Naive thymus-derived CD4-positive, alpha-beta T cell (primary cell): ENCODE measurements at regions of chr1 and their contacts with region 1.

Region 1: DNA sequence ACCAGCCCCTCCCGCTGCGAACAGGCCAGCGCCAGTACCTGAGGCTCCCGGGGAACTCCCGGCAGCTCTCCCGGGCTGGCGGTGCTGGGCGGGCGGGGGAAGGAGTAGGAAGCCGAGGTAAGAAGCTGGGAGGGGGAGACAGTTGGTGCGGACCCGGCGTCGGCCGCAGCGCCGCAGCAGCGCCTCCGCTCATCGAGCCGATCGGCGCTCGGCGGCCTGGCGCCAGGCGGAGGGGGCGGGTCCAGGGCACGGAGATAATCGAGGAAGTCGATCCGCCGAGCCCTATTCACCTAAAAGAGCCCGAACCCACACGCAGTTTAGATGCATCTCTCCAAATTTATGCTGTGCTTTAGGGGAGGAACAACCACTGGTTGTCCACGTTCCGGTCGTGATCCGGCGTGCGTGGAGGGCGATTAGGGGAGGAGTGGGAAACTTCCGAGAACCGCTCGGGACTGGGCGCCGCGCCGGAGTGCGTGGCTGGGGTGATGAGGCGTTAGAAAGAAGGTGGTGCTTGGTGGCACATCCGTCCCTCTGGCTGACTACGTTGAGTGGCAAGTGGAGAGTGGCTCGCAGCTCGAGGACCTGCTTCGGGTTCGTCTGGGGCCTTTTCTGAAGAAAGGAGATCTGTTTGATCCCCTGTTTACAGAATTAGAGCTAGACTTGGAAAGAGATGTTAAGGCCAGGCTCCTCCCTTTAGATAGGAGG is at the start of gene VAMP4:
- DNase-seq: peak; percentile 78 to 90 (median 87)
- ATAC-seq: peak; percentile 90
- H3K4me3 ChIP-seq: peak within 1 kb of the TSS; percentile 95
- H3K4me3 Mint-ChIP-seq: peak within 1 kb of the TSS; percentile 97 to 100 (median 99)
- H3K27ac ChIP-seq: peak within 1 kb of the TSS; percentile 95
- H3K27ac Mint-ChIP-seq: peak within 1 kb of the TSS; percentile 98 to 100 (median 100)
- H3K4me1 ChIP-seq: peaks cover 30 to 34% of the 10 kb centered on the region in 2 donors
- H3K4me1 Mint-ChIP-seq: peaks cover 25 to 62% (median 57%) of the 10 kb centered on the region in 7 donors
- H3K27me3 ChIP-seq: no peaks in the 10 kb centered on the region
- H3K27me3 Mint-ChIP-seq: no peaks in the 10 kb centered on the region
- total RNA-seq, gene VAMP4: 16.2 to 27.2 (median 19.7) TPM

Region 2: DNA sequence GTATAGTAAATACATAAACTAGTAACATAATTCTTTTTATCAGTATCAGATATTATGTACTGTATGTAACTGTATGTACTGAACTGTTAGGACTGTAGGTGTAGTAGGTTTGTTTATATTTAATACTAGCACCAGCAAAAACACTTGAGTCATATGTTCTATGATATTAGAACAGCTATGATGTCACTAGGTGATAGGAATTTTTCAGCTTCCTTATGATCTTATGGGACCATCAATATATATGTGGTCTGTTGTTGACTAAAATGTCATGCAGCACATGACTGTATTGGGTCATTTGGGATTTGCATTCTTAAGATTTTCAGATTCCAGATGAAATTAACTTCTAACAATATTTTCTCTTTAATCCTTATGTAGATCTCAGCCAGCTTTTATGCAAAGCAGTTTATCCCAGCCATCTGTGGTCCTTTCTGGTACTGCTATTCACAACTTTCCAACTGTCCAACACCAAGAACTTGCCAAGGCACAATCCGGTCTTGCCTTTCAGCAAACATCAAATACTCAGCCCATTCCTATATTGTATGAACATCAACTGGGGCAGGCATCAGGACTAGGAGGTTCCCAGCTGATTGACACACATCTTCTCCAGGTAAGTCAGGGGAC is 158.3 kb before region 1 on chr1:
- CTCF ChIA-PET with region 1: no interaction called
- POLR2A ChIA-PET with region 1: no interaction called
- intact Hi-C with region 1: loop called in 1 of 2 experiments (anchors 5 kb)
- DNase-seq: no peak
- ATAC-seq: no peak
- H3K4me3 ChIP-seq: no peak overlapping the region
- H3K4me3 Mint-ChIP-seq: no peak overlapping the region
- H3K27ac ChIP-seq: no peak overlapping the region
- H3K27ac Mint-ChIP-seq: peak overlapping the region in 4 of 9 donors; percentile 1 to 28 (median 8)
- H3K4me1 ChIP-seq: no peaks in the 10 kb centered on the region
- H3K4me1 Mint-ChIP-seq: peaks cover 4 to 33% (median 8%) of the 10 kb centered on the region in 7 donors
- H3K27me3 ChIP-seq: no peaks in the 10 kb centered on the region
- H3K27me3 Mint-ChIP-seq: no peaks in the 10 kb centered on the region

Region 3: DNA sequence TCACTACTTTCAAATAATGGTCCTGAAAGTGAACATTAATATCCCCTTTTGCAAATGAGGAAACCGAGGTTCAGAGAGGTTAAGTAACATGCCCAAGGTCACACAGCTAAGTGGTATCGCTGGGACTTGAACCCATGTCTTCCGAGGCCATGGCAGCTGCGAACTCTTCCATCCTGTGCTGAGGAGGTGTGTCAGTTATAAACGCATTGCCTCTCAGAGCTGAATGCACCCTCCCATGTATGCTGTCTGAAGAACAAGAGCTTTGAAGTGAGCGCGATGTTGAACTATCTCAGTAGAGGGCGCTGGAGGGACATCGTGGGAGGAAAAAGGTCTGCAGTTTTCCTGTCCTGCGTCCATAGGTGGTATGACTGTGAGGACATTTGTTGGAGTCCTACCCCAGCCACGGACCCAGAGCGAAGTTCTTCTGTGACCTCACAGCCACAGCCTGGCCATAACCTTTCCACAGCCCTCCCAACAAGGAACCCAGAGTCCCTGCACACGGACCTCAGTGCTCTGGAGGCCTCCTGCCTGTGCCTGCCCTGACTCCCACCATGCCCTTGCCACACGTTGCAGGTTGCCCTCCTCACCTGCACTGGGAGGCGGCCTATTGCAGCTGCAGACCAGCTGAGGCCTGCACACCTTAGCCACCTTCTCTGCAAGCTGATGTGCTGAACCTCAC is 97.1 kb before region 1 on chr1:
- CTCF ChIA-PET with region 1: no interaction called
- POLR2A ChIA-PET with region 1: no interaction called
- intact Hi-C with region 1: loop called in 1 of 2 experiments (anchors 1 kb)
- DNase-seq: peak; percentile 19 to 73 (median 62)
- ATAC-seq: peak; percentile 90
- H3K4me3 ChIP-seq: no peak overlapping the region
- H3K4me3 Mint-ChIP-seq: peak overlapping the region in 4 of 10 donors; percentile 2 to 27 (median 14)
- H3K27ac ChIP-seq: no peak overlapping the region
- H3K27ac Mint-ChIP-seq: peak overlapping the region in 3 of 9 donors; percentile 42 to 82 (median 77)
- H3K4me1 ChIP-seq: peaks cover 0 to 4% of the 10 kb centered on the region in 2 donors
- H3K4me1 Mint-ChIP-seq: peaks cover 4 to 12% (median 6%) of the 10 kb centered on the region in 7 donors
- H3K27me3 ChIP-seq: no peaks in the 10 kb centered on the region
- H3K27me3 Mint-ChIP-seq: peaks cover 0 to 9% (median 0%) of the 10 kb centered on the region in 5 donors

Region 4: DNA sequence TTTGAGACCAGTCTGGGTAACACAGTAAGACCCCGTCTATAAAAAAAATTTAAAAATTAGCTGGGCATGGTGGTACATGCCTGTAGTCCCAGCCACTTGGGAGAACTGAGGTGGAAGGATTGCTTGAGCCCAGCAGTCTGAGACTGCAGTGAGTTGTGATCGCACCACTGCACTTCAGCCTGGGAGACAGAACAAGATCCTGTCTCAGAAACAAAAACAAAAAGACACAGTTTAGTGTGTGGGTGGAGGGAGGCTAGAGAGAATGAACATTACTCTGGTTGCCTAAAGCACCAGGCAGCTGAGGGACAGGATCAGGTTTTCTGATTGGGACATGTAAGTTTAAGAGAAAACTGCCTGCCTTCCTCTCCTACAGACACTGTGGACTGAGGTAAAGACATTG is 42.5 kb before region 1 on chr1:
- CTCF ChIA-PET with region 1: no interaction called
- POLR2A ChIA-PET with region 1: no interaction called
- intact Hi-C with region 1: no loop called
- DNase-seq: no peak
- ATAC-seq: no peak
- H3K4me3 ChIP-seq: no peak overlapping the region
- H3K4me3 Mint-ChIP-seq: no peak overlapping the region
- H3K27ac ChIP-seq: no peak overlapping the region
- H3K27ac Mint-ChIP-seq: no peak overlapping the region
- H3K4me1 ChIP-seq: no peaks in the 10 kb centered on the region
- H3K4me1 Mint-ChIP-seq: peaks cover 0 to 2% (median 0%) of the 10 kb centered on the region in 7 donors
- H3K27me3 ChIP-seq: no peaks in the 10 kb centered on the region
- H3K27me3 Mint-ChIP-seq: no peaks in the 10 kb centered on the region

Region 5: DNA sequence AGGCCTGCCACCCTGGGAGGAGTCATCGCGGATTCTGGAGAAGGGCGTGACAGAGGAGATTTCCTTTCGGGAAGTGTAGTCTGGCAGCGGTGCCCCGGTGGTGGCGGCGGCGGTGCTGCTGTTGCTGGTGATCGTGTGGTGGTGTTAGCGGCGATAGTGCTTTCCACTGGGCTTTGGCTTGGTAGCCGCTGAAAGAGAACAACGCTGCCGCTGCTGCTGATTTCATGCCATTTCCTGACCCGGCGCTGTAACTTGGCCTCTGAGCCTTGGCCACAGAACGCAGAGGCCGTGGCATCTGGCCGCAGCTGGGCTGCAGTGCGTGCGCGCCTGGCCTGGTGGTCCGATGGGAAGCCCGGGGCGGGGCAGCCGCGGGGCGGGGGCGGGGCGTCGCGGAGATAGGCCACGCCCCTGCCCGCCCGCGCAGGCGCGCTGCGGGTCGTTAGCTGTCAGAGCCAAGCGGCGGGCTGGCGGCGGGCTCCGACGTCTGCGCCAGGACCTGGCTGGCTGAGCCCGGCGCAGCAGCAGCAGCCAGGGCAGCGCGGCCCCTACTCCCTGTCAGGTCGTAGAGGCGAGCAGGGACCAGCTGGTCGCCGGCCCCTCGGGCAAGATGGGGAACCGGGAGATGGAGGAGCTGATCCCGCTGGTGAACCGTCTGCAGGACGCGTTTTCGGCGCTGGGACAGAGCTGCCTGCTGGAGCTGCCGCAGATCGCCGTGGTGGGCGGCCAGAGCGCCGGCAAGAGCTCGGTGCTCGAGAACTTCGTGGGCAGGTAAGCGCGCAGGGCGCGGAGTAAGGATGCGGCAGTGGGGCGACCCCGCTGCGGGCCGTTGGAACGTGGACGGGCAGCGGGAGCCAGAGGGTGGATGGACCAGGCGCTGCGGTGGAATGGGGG is 99.3 kb after region 1 on chr1 and contains the start of gene DNM3:
- CTCF ChIA-PET with region 1: no interaction called
- POLR2A ChIA-PET with region 1: interaction called, 12 read pairs
- intact Hi-C with region 1: loop called (anchors 1 kb)
- DNase-seq: peak; percentile 71 to 90 (median 86)
- ATAC-seq: peak; percentile 97
- H3K4me3 ChIP-seq: peak within 1 kb of the TSS; percentile 80
- H3K4me3 Mint-ChIP-seq: peak within 1 kb of the TSS; percentile 85 to 93 (median 90)
- H3K27ac ChIP-seq: peak within 1 kb of the TSS; percentile 64
- H3K27ac Mint-ChIP-seq: peak within 1 kb of the TSS; percentile 76 to 95 (median 83)
- H3K4me1 ChIP-seq: peaks cover 0 to 6% of the 10 kb centered on the region in 2 donors
- H3K4me1 Mint-ChIP-seq: peaks cover 15 to 19% (median 18%) of the 10 kb centered on the region in 7 donors
- H3K27me3 ChIP-seq: peaks cover 3 to 16% of the 10 kb centered on the region in 2 donors
- H3K27me3 Mint-ChIP-seq: peaks cover 12 to 44% (median 16%) of the 10 kb centered on the region in 5 donors
- total RNA-seq, gene DNM3: 1.9 to 2.5 (median 2.1) TPM

Region 6: GRCh38 chr1:172269644-172270043 is 527.6 kb after region 1 on chr1:
- CTCF ChIA-PET with region 1: no interaction called
- POLR2A ChIA-PET with region 1: no interaction called
- intact Hi-C with region 1: loop called in 1 of 2 experiments (anchors 5 kb)
- DNase-seq: no peak
- ATAC-seq: no peak
- H3K4me3 ChIP-seq: no peak overlapping the region
- H3K4me3 Mint-ChIP-seq: peak overlapping the region in 1 of 10 donors; percentile 18
- H3K27ac ChIP-seq: no peak overlapping the region
- H3K27ac Mint-ChIP-seq: peak overlapping the region in 2 of 9 donors; percentile 31 to 71
- H3K4me1 ChIP-seq: no peaks in the 10 kb centered on the region
- H3K4me1 Mint-ChIP-seq: peaks cover 0 to 43% (median 0%) of the 10 kb centered on the region in 7 donors
- H3K27me3 ChIP-seq: no peaks in the 10 kb centered on the region
- H3K27me3 Mint-ChIP-seq: no peaks in the 10 kb centered on the region

Region 7: DNA sequence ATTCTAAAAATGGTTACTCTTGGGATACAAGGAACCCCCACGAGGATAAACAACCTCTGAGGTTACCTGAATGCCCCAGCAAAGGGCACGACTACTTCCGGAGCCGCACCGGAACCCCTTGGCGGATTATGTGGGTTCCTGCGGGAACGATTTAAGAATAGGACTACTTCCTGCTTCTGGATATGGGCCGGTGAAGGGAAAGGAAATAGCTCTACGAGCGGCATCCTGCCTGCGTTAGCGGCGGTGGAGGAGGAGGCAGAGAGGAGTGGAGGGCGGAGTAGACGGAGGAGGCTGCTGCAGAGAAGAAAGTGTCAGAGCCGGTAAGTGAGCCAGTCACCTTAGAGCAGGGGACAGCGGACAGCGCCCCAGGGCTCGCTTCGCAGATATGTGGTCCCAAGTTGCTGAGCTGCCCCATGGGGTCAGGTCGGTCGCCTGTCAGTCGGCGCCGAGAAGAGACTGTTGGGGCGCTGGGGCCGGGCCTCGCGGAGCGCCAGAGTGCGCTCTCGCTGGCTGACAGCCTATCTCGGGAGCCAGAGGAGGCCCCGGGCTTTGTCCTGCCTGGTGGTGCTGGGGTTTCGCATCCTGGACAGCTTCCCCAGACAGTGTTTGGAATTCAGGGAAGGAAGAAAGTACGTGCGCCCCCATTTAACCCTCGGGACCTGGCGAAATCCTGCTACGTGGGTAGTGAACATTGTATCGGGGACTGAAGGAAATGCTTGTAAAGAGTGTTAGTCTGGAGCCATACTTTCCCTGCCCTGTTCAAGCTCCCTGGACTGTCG is 1972.9 kb after region 1 on chr1 and contains the start of gene KLHL20:
- CTCF ChIA-PET with region 1: no interaction called
- POLR2A ChIA-PET with region 1: no interaction called
- intact Hi-C with region 1: loop called in 1 of 2 experiments (anchors 10 kb)
- DNase-seq: peak; percentile 60 to 92 (median 89)
- ATAC-seq: peak; percentile 98
- H3K4me3 ChIP-seq: peak within 1 kb of the TSS; percentile 77
- H3K4me3 Mint-ChIP-seq: peak within 1 kb of the TSS; percentile 90 to 100 (median 96)
- H3K27ac ChIP-seq: peak within 1 kb of the TSS; percentile 78
- H3K27ac Mint-ChIP-seq: peak within 1 kb of the TSS; percentile 89 to 99 (median 94)
- H3K4me1 ChIP-seq: peaks cover 11 to 18% of the 10 kb centered on the region in 2 donors
- H3K4me1 Mint-ChIP-seq: peaks cover 14 to 48% (median 35%) of the 10 kb centered on the region in 7 donors
- H3K27me3 ChIP-seq: no peaks in the 10 kb centered on the region
- H3K27me3 Mint-ChIP-seq: peaks cover 14 to 32% (median 19%) of the 10 kb centered on the region in 5 donors
- total RNA-seq, gene KLHL20: 28.3 to 40.9 (median 32.8) TPM